SK-N-SH (cell line): ENCODE measurements at regions of chr10 and their contacts with region 1.

Region 1: DNA sequence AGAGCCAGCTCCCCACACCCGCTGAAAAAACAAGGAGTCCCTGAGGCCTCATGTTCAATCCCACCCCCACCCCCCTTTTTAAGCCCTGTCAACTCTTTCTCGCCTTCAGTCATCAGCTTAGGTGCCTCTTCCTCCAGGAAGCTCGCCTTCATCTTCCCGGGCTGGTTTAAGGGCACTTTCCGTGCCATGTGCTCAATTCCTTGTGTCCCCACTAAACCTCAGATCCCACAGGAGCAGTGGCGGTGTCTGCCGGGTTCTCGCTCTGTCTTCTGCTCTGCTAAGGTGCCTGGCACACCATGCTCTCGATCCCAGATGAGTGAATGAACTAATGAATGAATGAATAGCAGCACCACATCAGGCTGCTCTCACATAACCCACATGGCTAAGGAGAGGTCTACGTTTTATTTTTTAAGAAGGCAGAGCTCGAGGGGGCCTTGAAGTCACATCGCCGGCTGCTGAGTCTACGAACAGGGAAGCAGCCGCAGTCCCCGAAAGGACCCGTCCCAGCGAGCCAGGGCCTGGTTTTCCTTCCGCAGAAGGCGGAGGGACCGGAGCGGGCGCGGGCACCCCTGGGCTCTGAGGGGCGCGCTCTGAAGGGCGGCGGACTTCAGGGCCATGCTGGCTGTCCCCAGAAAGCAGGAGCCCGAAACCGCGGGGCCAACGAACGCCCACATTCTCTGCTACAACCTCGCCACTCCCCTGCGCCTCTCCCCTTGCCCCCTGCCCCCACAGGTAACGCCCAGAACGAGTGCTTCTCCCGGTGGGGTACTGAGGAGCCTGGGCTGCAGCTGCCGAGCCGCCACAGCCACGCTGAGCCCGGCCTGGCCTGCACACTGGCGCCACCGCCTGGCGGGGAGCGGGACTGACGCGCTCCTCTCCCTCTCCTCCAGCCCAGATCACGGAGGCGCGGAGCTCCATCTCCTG is 73.4 kb upstream of the KCNMA1 start:
- DNase-seq: peak; percentile 90
- H3K4me3 ChIP-seq: no peak overlapping the region; a peak in 1 of 4 replicates
- H3K27ac ChIP-seq: no peak overlapping the region
- H3K4me1 ChIP-seq: peaks cover 4 to 8% of the 10 kb centered on the region in 2 experiments; a peak in 1 of 4 replicates
- H3K27me3 ChIP-seq: no peaks in the 10 kb centered on the region
- CTCF ChIP-seq: peak; percentile 86
- EP300 ChIP-seq: no peak
- RAD21 ChIP-seq: peak; percentile 75

Region 2: GRCh38 chr10:77165445-77166208 is 545.4 kb before region 1 on chr10:
- CTCF ChIA-PET with region 1: interaction called, 31 read pairs
- POLR2A ChIA-PET with region 1: no interaction called
- DNase-seq: peak; percentile 54
- H3K4me3 ChIP-seq: peak overlapping the region in 1 of 2 experiments; percentile 3; a peak in 1 of 4 replicates
- H3K27ac ChIP-seq: peak overlapping the region in 1 of 2 experiments; percentile 96; a peak in 1 of 4 replicates
- H3K4me1 ChIP-seq: peaks cover 25 to 29% of the 10 kb centered on the region in 2 experiments
- H3K27me3 ChIP-seq: no peaks in the 10 kb centered on the region
- CTCF ChIP-seq: peak; percentile 79
- EP300 ChIP-seq: no peak
- RAD21 ChIP-seq: peak; percentile 90

Region 3: DNA sequence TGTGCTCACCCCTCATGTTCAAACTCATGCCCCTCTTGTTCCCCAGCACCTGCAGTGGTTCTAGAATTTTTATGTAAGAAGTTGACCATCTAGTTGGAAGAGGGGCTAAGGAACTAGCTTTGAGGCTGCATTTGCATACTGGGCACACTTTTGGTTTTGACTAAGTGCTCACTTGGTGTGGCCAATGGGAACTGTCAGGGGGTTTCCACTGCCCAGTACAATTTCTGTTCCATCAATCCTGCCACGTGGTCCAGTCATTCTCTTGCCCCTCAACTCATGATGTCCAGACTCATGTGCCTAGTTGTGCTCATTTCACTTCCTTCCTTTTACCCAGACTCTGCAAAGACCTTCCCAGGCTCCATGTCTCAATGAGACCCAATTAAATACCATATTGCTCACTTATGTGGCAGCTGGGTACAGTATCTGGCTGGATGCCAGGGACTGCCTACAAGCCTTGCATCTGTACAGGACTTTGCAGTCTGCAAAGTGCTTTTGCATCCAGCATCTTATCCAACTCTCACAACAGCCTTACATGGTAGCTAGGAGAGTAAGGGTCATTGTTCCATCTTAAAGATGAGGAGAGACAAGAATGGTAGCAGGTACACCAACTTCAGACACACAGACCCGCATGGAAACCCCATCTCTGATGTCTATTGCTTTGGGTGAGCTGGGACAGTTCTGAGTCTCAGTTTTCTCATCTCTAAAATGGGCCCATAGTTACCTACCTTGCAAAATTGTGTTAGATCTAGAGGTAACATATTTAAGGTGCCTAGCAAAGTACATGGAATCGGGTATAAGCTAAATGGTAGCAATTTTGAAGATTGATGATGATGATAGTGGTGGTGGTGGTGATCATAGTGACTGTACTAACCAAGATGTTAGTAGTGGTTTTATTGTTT is 43.3 kb before region 1 on chr10:
- CTCF ChIA-PET with region 1: interaction called, 10 read pairs
- POLR2A ChIA-PET with region 1: no interaction called
- DNase-seq: peak; percentile 27
- H3K4me3 ChIP-seq: no peak overlapping the region
- H3K27ac ChIP-seq: no peak overlapping the region
- H3K4me1 ChIP-seq: no peaks in the 10 kb centered on the region; a peak in 1 of 4 replicates
- H3K27me3 ChIP-seq: no peaks in the 10 kb centered on the region
- CTCF ChIP-seq: no peak
- EP300 ChIP-seq: no peak
- RAD21 ChIP-seq: no peak

Region 4: GRCh38 chr10:77692782-77693181 is 18.2 kb before region 1 on chr10:
- CTCF ChIA-PET with region 1: interaction called, 55 read pairs
- POLR2A ChIA-PET with region 1: no interaction called
- DNase-seq: no peak
- H3K4me3 ChIP-seq: no peak overlapping the region
- H3K27ac ChIP-seq: no peak overlapping the region
- H3K4me1 ChIP-seq: peaks cover 0 to 3% of the 10 kb centered on the region in 2 experiments; a peak in 1 of 4 replicates
- H3K27me3 ChIP-seq: peaks cover 13% of the 10 kb centered on the region; the same call in 1 of the 2 replicates
- CTCF ChIP-seq: no peak
- EP300 ChIP-seq: no peak
- RAD21 ChIP-seq: no peak

Region 5: GRCh38 chr10:77756319-77757232 is 45.6 kb after region 1 on chr10:
- CTCF ChIA-PET with region 1: interaction called, 13 read pairs
- POLR2A ChIA-PET with region 1: no interaction called
- DNase-seq: peak; percentile 65
- H3K4me3 ChIP-seq: no peak overlapping the region; a peak in 1 of 4 replicates
- H3K27ac ChIP-seq: no peak overlapping the region
- H3K4me1 ChIP-seq: peaks cover 0 to 3% of the 10 kb centered on the region in 2 experiments; a peak in 1 of 4 replicates
- H3K27me3 ChIP-seq: no peaks in the 10 kb centered on the region
- CTCF ChIP-seq: peak; percentile 89
- EP300 ChIP-seq: no peak
- RAD21 ChIP-seq: peak; percentile 89